Gastrocnemius medialis (tissue), 4 donors: ENCODE measurements at regions of chr17 and their contacts with region 1.

Region 1: GRCh38 chr17:42112552-42113176 is at the start of gene DHX58:
- DNase-seq: peak; percentile 59 to 70
- ATAC-seq: peak; percentile 86 to 87
- H3K4me3 ChIP-seq: peak within 1 kb of the TSS; percentile 52 to 66 (median 64)
- H3K27ac ChIP-seq: peak within 1 kb of the TSS; percentile 85 to 93 (median 87)
- H3K4me1 ChIP-seq: peaks cover 16% of the 10 kb centered on the region in 2 donors
- H3K27me3 ChIP-seq: no peaks in the 10 kb centered on the region
- CTCF ChIP-seq: no peak
- POLR2A ChIP-seq: peak; percentile 24 to 35
- total RNA-seq, gene DHX58: 1.1 to 4.4 (median 3.1) TPM

Region 2: DNA sequence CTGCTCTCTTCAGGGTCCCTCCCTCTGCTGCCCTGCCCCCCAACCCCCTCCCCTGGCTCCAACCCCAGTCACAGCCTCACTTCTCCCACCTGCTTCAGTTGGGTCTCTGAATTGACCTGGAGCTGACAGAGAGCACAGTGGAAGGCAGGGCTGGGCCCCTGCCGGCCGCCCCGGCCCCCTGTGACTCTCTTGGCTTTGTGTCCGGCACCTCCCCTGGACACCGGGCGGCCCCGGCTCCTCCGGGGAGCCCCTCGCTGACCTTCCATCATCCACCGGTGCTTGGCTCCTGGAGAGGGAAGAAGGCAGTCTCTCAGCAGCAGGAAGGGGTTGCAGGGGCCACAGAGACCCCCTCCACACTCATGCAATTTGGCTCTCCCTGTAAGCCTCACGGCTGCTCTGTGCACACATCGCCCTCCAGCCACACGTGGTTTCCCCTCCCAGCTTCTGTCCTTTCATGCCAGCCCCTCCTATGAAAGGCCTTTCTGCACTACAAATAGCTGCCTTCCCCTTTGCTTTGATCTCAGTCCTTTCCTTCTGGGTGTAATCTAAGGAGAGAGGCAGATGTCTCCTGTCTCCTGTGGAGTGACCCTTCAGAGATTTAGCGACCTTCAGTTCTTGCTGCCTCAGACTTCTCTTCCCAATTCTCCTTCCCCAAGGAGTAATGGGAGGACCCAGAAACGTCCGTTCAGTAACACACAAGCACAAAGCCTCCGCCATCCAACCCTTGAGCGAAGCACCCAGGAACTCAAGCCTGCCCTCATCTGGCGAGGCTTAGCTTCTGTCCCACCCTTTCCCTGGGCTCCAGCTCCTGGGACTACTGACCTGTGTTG is 84.5 kb before region 1 on chr17:
- in situ Hi-C with region 1: loop called (anchors 5 to 10 kb)
- intact Hi-C with region 1: loop called (anchors 1 kb)
- DNase-seq: no peak
- ATAC-seq: no peak
- H3K4me3 ChIP-seq: no peak overlapping the region
- H3K27ac ChIP-seq: peak overlapping the region in 1 of 4 donors; percentile 10
- H3K4me1 ChIP-seq: peaks cover 14 to 18% of the 10 kb centered on the region in 2 donors
- H3K27me3 ChIP-seq: no peaks in the 10 kb centered on the region
- CTCF ChIP-seq: no peak
- POLR2A ChIP-seq: no peak

Region 3: DNA sequence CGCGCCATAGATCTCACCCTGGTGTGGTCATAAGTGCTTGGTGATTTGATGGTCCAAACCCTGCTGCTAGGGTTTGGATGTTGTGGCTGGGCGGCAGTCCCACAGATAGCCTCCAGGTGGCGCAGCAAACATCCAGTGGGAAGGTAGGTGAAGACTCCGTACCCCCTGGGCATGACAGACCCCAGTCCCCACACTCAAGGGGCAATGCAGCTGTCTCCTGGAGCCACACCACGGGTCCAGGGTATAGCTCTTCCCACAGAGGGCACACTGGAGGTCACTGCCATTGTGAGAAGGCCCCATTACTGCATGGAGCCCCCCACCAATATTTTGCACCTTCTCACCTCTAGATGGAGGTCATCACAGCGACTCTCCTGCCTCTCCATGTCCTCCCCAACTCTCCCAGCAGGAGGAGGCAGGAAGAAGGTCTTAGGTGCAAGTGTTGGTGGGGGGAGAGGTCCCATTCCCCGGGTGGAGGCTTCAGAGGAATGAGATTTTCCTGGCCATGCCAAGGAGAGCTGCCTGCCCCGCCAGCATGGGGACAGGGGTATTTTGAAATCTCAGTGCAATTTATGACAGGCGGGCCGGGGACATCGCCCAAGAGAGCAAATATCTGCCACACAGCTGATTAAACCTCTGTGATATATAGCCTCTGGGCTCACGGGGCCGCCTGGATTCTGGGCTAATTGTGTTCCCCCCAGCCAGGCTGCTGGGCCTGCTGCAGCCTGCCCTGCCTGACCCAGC is 45.1 kb before region 1 on chr17:
- in situ Hi-C with region 1: loop called in 1 of 4 experiments (anchors 10 kb)
- intact Hi-C with region 1: loop called (anchors 1 kb)
- DNase-seq: peak; percentile 43 to 80
- ATAC-seq: peak; percentile 68 to 78
- H3K4me3 ChIP-seq: no peak overlapping the region
- H3K27ac ChIP-seq: peak overlapping the region; percentile 45 to 70 (median 61)
- H3K4me1 ChIP-seq: peaks cover 24 to 27% of the 10 kb centered on the region in 2 donors
- H3K27me3 ChIP-seq: no peaks in the 10 kb centered on the region
- CTCF ChIP-seq: peak; percentile 89 to 96 (median 95)
- POLR2A ChIP-seq: no peak